Activated CD4-positive, alpha-beta T cell treated with anti-CD3 and anti-CD28 coated beads, Interleukin-2, amount 10 ng/mL, durations not matched to agents 24 days and 14 days (primary cell): ENCODE measurements at regions of chr7 and their contacts with region 1.

Region 1: DNA sequence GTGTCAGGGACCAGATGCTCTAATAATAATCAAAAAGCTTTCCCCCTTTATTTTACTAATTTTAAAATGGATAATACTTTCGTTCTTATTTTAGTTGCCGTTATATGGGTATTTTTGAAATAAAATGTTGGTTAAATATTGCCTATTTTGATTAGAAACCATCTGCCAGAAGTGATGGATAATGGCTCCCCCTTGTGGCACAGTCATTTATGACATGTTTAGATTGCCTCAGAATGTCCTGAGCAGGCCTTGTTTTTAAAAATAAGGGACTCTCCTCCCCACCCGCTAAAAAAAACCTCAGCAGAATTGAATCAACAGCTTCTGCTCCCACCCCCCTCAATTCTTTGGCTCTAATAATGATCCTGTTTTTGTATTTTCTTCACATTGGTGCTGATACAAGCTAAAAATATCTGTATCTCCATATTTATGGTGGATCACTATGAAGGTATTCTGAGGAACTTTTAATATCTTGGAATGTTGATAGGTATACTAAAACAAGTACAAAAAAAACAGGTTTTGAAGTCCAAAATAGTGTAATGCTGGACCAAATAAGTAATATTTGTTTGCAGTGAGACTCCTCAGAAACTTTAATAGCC is 38.8 kb downstream of the TMEM60 start:
- DNase-seq: peak; percentile 92
- H3K4me3 Mint-ChIP-seq: no peak overlapping the region
- H3K27ac Mint-ChIP-seq: no peak overlapping the region
- H3K4me1 Mint-ChIP-seq: peaks cover 12% of the 10 kb centered on the region
- H3K27me3 Mint-ChIP-seq: no peaks in the 10 kb centered on the region

Region 2: DNA sequence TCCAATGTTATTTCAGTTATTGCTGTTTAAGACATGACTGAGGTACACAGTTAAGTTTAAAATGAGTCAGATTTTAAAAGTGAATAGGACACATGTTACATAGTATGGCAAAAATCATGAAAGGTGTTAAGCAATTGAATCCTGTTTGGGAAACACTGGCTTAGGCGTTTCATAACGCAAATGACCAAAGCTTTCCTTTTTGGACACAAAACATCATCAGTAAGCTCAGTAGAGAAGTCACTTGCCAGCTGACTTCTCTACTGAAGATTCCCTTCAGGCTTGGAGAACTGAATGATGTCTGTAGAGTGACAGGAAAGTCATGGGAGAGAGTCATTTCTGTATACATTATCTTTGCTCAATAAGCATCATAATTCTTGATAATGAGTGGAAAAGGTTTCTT is 127.6 kb before region 1 on chr7:
- intact Hi-C with region 1: no loop called
- DNase-seq: no peak
- H3K4me3 Mint-ChIP-seq: no peak overlapping the region
- H3K27ac Mint-ChIP-seq: no peak overlapping the region
- H3K4me1 Mint-ChIP-seq: no peaks in the 10 kb centered on the region
- H3K27me3 Mint-ChIP-seq: no peaks in the 10 kb centered on the region

Region 3: GRCh38 chr7:77651573-77652162 is 107.7 kb before region 1 on chr7:
- intact Hi-C with region 1: loop called (anchors 1 kb)
- DNase-seq: peak; percentile 81
- H3K4me3 Mint-ChIP-seq: no peak overlapping the region
- H3K27ac Mint-ChIP-seq: no peak overlapping the region
- H3K4me1 Mint-ChIP-seq: no peaks in the 10 kb centered on the region
- H3K27me3 Mint-ChIP-seq: no peaks in the 10 kb centered on the region

Region 4: GRCh38 chr7:77657427-77658224 is 101.8 kb before region 1 on chr7:
- intact Hi-C with region 1: loop called (anchors 1 kb)
- DNase-seq: peak; percentile 78
- H3K4me3 Mint-ChIP-seq: no peak overlapping the region
- H3K27ac Mint-ChIP-seq: no peak overlapping the region
- H3K4me1 Mint-ChIP-seq: no peaks in the 10 kb centered on the region
- H3K27me3 Mint-ChIP-seq: no peaks in the 10 kb centered on the region